Heart left ventricle (tissue), 16 donors: ENCODE measurements at regions of chr9 and their contacts with region 1.

Region 1: DNA sequence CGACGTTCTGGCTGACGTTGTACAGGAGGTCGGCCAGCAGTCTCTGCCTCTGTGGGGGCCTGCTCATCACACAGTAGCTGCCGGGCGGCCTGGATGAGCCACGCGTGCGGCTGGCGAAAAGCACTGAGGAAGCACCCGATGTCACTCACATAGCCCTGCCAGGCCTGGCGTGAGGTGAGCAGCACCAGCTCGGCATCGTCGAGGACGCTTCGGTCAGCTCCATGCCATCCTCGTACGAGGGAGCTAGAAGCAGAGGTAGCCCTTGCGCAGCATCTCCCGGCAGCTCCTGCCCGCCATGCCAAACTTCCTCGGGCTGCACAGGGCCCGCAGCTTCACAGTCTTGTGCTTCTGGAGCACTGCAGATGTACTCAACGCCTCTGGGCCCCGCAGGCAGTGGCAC is 6.2 kb downstream of the NDUFB6 start:
- DNase-seq: no peak
- ATAC-seq: peak in 1 of 4 donors; percentile 41
- H3K4me3 ChIP-seq: no peak overlapping the region
- H3K27ac ChIP-seq: no peak overlapping the region
- H3K4me1 ChIP-seq: peaks cover 0 to 24% (median 13%) of the 10 kb centered on the region in 12 donors
- H3K27me3 ChIP-seq: no peaks in the 10 kb centered on the region
- CTCF ChIP-seq: no peak
- POLR2A ChIP-seq: no peak

Region 2: GRCh38 chr9:32502464-32502863 is 64.3 kb before region 1 on chr9:
- intact Hi-C with region 1: loop called in 1 of 10 experiments (anchors 10 kb)
- DNase-seq: no peak
- ATAC-seq: peak in 1 of 4 donors; percentile 53
- H3K4me3 ChIP-seq: no peak overlapping the region
- H3K27ac ChIP-seq: no peak overlapping the region
- H3K4me1 ChIP-seq: peaks cover 0 to 9% (median 0%) of the 10 kb centered on the region in 12 donors
- H3K27me3 ChIP-seq: no peaks in the 10 kb centered on the region
- CTCF ChIP-seq: no peak
- POLR2A ChIP-seq: no peak